ENCODE measurements at regions of chr7 and their contacts with region 1.

Region 1: DNA sequence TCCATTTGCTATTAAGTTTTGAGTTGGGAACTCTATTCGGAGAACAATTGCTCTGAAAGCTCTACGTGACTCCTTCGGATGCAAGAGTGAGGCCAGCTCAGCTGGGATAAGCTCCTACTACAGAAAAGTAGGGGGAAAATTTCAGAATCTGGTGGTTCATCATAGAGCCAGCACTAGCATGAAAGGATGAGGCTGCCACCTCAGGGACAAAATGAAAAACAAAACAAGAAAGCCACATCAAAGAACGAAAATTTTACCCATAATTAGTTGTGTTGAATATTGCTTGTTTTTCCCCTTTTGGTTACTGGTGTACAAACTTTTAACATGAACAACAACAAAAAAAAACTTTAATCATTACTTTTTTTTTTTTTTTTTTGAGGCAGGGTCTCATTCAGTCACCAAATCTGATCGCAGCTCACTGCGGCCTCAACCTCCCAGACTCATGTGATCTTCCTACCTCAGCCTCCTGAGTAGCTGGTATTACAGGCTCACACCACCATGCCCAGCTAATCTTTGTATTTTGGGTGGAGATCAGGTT is 39.7 kb upstream of the NFE2L3 start:
- DNase-seq: no peak
- ATAC-seq: no peak
- H3K4me3 ChIP-seq: no peak overlapping the region
- H3K27ac ChIP-seq: no peak overlapping the region
- H3K4me1 ChIP-seq: no peaks in the 10 kb centered on the region
- H3K27me3 ChIP-seq: no peaks in the 10 kb centered on the region
- CTCF ChIP-seq: no peak

Region 2: GRCh38 chr7:25402532-25402931 is 709.7 kb before region 1 on chr7:
- intact Hi-C with region 1: no loop called
- DNase-seq: no peak
- ATAC-seq: peak; percentile 25 to 93 (median 84)
- H3K4me3 ChIP-seq: no peak overlapping the region
- H3K27ac ChIP-seq: peak overlapping the region; percentile 58
- H3K4me1 ChIP-seq: peaks cover 8% of the 10 kb centered on the region
- H3K27me3 ChIP-seq: no peaks in the 10 kb centered on the region
- CTCF ChIP-seq: no peak

Region 3: DNA sequence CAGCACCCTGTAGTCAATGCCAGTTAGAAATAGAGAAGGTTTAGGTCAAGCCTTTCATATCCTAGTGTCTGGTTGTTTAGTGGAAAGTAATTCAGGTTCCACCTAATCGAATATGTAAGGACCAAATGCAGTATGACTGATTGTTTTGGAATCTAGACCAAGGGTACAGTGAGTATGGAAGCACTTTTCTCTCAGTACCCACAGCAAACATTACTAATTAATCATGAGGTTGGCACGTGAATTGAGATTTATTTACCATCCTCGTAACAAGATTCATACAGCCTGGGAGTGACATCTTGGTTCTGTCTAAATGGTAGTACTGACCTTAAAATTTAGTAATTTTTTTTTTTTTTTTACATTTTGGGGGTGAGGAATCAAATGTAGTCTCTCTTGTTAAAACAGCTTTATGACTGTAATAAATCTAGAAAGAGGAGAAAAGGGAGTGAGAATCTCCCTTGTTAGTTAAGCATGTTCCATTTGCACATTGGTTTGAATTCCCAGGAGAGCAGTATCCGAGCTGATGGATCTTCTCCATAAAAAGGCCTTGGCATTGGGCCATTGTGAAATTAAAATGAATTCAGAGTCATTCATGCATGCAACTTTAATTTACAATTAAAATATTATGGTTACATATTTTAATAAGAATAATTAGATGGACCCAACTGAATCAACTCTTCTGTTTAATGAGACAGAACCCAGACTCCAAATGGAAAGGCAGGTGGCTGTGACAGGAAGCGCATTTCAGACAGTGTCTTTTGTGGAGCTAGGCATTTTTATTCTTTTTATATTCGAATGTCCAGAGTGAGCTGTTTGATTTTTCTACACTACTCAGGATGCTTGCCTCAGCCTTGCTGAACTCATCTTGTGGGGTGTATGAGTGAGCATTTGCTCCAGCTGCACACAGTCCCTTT is 237.0 kb after region 1 on chr7:
- intact Hi-C with region 1: loop called in 1 of 2 experiments (anchors 2 kb)
- DNase-seq: no peak
- ATAC-seq: no peak
- H3K4me3 ChIP-seq: no peak overlapping the region
- H3K27ac ChIP-seq: no peak overlapping the region
- H3K4me1 ChIP-seq: no peaks in the 10 kb centered on the region
- H3K27me3 ChIP-seq: no peaks in the 10 kb centered on the region
- CTCF ChIP-seq: no peak